GM12878 (cell line): ENCODE measurements at regions of chr3 and their contacts with region 1.

Region 1: GRCh38 chr3:157493627-157494550 is 9.3 kb downstream of the VEPH1 start:
- DNase-seq: no peak
- ATAC-seq: peak; percentile 48
- H3K4me3 ChIP-seq: no peak overlapping the region
- H3K27ac ChIP-seq: no peak overlapping the region
- H3K4me1 ChIP-seq: no peaks in the 10 kb centered on the region
- H3K27me3 ChIP-seq: no peaks in the 10 kb centered on the region; a peak in 2 of 4 replicates
- CTCF ChIP-seq: peak; percentile 39 to 58 (median 55); a peak in 5 of 6 replicates
- EP300 ChIP-seq: no peak
- POLR2A ChIP-seq: no peak
- RAD21 ChIP-seq: peak; percentile 43

Region 2: GRCh38 chr3:156910022-156910421 is 583.9 kb before region 1 on chr3:
- CTCF ChIA-PET with region 1: no interaction called
- POLR2A ChIA-PET with region 1: no interaction called
- RAD21 ChIA-PET with region 1: no interaction called
- SMC1A ChIA-PET with region 1: no interaction called
- in situ Hi-C with region 1: no loop called
- intact Hi-C with region 1: no loop called
- DNase-seq: no peak
- ATAC-seq: no peak
- H3K4me3 ChIP-seq: no peak overlapping the region
- H3K27ac ChIP-seq: no peak overlapping the region
- H3K4me1 ChIP-seq: no peaks in the 10 kb centered on the region
- H3K27me3 ChIP-seq: no peaks in the 10 kb centered on the region
- CTCF ChIP-seq: no peak
- EP300 ChIP-seq: no peak
- POLR2A ChIP-seq: no peak
- RAD21 ChIP-seq: no peak

Region 3: GRCh38 chr3:157248590-157249422 is 245.1 kb before region 1 on chr3:
- CTCF ChIA-PET with region 1: no interaction called
- POLR2A ChIA-PET with region 1: no interaction called
- RAD21 ChIA-PET with region 1: no interaction called
- SMC1A ChIA-PET with region 1: no interaction called
- in situ Hi-C with region 1: no loop called
- intact Hi-C with region 1: loop called (anchors 10 kb)
- DNase-seq: no peak
- ATAC-seq: no peak
- H3K4me3 ChIP-seq: no peak overlapping the region
- H3K27ac ChIP-seq: no peak overlapping the region
- H3K4me1 ChIP-seq: no peaks in the 10 kb centered on the region
- H3K27me3 ChIP-seq: no peaks in the 10 kb centered on the region
- CTCF ChIP-seq: no peak
- EP300 ChIP-seq: no peak
- POLR2A ChIP-seq: no peak
- RAD21 ChIP-seq: no peak

Region 4: GRCh38 chr3:157354722-157355121 is 139.2 kb before region 1 on chr3:
- CTCF ChIA-PET with region 1: no interaction called
- POLR2A ChIA-PET with region 1: no interaction called
- RAD21 ChIA-PET with region 1: no interaction called
- SMC1A ChIA-PET with region 1: no interaction called
- in situ Hi-C with region 1: no loop called
- intact Hi-C with region 1: loop called (anchors 10 kb)
- DNase-seq: no peak
- ATAC-seq: 0 out of 3 replicates have a peak, but pooled peaks have one; percentile 24
- H3K4me3 ChIP-seq: no peak overlapping the region
- H3K27ac ChIP-seq: no peak overlapping the region
- H3K4me1 ChIP-seq: no peaks in the 10 kb centered on the region
- H3K27me3 ChIP-seq: no peaks in the 10 kb centered on the region; a peak in 2 of 4 replicates
- CTCF ChIP-seq: peak; percentile 36 to 55 (median 44); a peak in 4 of 6 replicates
- EP300 ChIP-seq: no peak
- POLR2A ChIP-seq: no peak
- RAD21 ChIP-seq: no peak